ENCODE measurements at regions of chr19 and their contacts with region 1.

Region 1: GRCh38 chr19:38319421-38320258 is at the start of gene KCNK6:
- DNase-seq: peak; percentile 88
- total RNA-seq, gene KCNK6: 10.2 to 14.5 TPM

Region 2: DNA sequence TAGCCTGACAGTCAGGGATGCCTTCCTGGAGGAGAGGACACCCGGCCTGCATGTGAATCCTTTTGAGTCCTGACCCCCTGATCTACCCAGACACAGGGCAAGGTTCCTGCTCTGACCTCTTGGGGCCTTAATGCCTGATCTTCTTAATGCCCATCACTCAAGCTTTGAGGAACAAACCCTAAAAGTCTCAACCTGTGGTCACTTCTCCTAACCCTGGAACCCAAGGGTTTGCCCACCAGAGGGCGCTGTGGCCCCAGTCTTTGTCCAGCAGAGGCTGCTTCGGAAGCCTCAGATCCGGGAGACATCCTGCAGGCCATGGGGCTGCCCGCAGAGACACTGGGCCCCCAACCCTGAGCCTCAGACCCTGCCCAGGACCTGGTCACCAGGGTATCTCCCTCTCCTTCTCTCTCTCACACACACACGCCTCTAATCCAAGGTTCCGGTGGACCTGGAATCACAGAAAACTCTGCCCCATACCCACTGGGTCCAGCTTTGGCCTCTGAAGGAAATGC is 85.8 kb before region 1 on chr19:
- intact Hi-C with region 1: loop called in 1 of 2 experiments (anchors 5 kb)
- DNase-seq: peak; percentile 95

Region 3: DNA sequence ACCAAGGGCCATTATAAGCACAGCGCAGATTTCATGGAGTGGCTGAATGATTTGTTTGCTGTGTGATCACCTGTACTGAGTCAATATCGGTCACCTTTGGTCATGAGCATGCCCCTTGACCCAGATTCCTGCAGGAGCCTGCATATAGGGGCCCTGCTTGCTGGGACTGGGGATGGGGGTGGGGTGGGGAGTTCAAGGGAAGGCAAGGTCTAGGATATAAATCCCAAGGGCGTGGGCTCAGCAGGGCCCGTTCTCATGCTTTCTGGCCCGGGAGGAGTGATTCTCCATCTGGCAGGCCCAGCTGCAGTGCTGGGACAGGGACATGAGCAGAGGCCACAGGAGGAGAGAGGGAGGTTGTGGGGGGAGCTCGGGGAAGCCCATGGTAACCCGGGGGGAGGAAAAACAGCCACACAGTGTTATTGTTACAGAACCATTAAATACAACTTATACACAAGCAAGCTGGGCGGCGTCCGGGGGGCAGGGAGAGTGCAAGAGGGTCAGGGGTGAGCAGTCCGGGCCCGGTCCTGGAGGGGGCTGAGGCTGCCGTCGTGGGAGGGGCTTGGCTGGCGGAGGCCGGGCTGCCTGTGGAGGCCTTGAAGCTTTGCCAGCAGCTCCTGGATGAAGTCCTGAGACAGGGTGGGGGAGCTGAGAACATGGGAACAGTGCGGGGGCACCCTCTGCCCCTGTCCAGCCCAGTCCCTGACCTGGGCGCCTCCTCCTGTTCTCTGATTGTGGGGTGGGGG is 68.6 kb before region 1 on chr19:
- intact Hi-C with region 1: loop called in 1 of 2 experiments (anchors 5 kb)
- DNase-seq: peak; percentile 90

Region 4: DNA sequence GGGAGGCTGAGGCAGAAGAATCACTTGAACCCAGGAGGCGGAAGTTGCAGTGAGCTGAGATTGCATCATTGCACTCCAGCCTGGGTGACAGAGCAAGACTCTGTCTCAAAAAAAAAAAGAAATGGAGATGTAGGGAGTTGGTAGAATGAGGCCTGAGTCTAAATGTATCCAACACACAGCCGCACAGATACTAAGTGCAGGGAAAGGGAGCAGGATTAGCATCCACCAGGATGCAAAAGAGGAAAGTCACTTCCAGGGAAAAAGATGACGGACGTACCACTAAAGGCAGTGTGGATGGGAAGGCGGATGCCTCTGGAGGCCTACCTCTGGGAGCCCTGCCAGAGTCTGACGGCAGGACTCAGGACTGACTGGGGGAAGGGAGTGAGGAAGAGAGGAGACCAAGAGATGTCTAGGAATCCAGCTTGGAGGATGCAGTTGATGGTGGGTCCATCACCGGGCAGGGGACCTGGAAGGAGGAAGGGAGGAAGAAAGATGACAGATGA is 90.0 kb after region 1 on chr19:
- intact Hi-C with region 1: no loop called
- DNase-seq: no peak

Region 5: DNA sequence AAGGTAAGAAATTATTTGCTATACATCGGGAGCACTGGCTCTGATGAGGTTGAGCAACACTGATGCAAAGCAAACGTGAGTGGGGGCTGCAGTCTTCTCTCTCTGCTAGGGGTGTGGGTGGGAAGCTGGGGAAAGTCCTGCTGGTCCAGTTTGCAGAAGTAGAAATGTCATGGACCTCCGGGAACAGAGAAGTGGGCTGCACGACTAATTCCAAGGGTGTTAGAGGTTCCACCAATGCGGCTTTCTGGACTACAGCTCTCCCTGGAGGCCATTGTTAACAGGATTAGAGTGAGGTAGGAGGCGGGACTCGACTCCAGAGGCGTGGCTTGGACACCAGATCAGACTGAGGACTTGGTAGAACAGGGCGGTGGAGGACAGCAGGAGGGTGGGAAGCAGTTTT is 718.5 kb after region 1 on chr19:
- intact Hi-C with region 1: no loop called
- DNase-seq: no peak

Measured in posterior vena cava (tissue), 2 donors.